ENCODE measurements at regions of chr20 and their contacts with region 1.

Region 1: DNA sequence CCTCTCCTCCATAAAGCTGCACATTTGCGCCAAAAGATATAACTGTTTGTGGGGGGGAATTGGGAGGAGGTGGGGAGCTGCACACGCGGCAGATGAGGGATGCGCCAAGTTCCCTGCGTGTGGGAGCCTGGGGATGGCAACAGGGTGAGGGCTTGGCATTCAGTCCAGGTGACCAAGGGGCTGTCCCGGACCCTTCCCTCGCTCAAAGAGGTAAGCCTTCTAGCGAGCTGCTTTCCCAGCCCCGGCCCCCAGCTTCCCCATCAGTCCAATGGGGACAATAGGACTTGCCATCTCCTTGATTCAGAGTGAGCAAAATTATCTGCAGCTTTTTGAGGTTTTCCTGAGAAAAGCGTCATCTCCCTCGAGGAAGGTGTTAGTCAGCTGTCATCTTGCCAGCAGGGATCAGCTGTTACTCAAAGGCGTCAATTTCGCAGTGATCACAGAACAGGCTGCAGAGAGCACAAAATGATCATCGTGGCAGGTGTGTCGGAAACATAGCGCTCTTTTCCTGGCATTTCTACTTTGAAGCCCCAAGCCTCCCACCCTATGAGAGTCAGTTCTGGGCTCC is 21.3 kb downstream of the ZNF831 start:
- DNase-seq: no peak
- ATAC-seq: no peak
- H3K4me3 ChIP-seq: no peak overlapping the region
- H3K27ac ChIP-seq: no peak overlapping the region
- H3K4me1 ChIP-seq: no peaks in the 10 kb centered on the region
- H3K27me3 ChIP-seq: peaks cover 0 to 2% of the 10 kb centered on the region in 2 donors

Region 2: GRCh38 chr20:59120491-59120890 is 64.5 kb before region 1 on chr20:
- intact Hi-C with region 1: loop called in 1 of 2 experiments (anchors 10 kb)
- DNase-seq: no peak
- ATAC-seq: no peak
- H3K4me3 ChIP-seq: no peak overlapping the region
- H3K27ac ChIP-seq: no peak overlapping the region
- H3K4me1 ChIP-seq: no peaks in the 10 kb centered on the region
- H3K27me3 ChIP-seq: no peaks in the 10 kb centered on the region